ENCODE measurements at regions of chr9 and their contacts with region 1.

Region 1: GRCh38 chr9:87324613-87325194 is 173.0 kb upstream of the DAPK1 start:
- DNase-seq: peak; percentile 75
- H3K4me3 Mint-ChIP-seq: no peak overlapping the region
- H3K27ac Mint-ChIP-seq: no peak overlapping the region
- H3K4me1 Mint-ChIP-seq: peaks cover 17% of the 10 kb centered on the region
- H3K27me3 Mint-ChIP-seq: no peaks in the 10 kb centered on the region
- CTCF ChIP-seq: peak; percentile 52

Region 2: GRCh38 chr9:86202338-86202882 is 1122.3 kb before region 1 on chr9:
- CTCF ChIA-PET with region 1: no interaction called
- POLR2A ChIA-PET with region 1: no interaction called
- intact Hi-C with region 1: loop called (anchors 2 kb)
- DNase-seq: peak; percentile 64
- H3K4me3 Mint-ChIP-seq: no peak overlapping the region
- H3K27ac Mint-ChIP-seq: no peak overlapping the region
- H3K4me1 Mint-ChIP-seq: peaks cover 6% of the 10 kb centered on the region
- H3K27me3 Mint-ChIP-seq: no peaks in the 10 kb centered on the region
- CTCF ChIP-seq: peak; percentile 65

Region 3: GRCh38 chr9:86434039-86434726 is 890.5 kb before region 1 on chr9:
- CTCF ChIA-PET with region 1: interaction called, 52 read pairs
- POLR2A ChIA-PET with region 1: interaction called, 3 read pairs
- intact Hi-C with region 1: loop called (anchors 1 kb)
- DNase-seq: peak; percentile 56
- H3K4me3 Mint-ChIP-seq: no peak overlapping the region
- H3K27ac Mint-ChIP-seq: no peak overlapping the region
- H3K4me1 Mint-ChIP-seq: peaks cover 13% of the 10 kb centered on the region
- H3K27me3 Mint-ChIP-seq: no peaks in the 10 kb centered on the region
- CTCF ChIP-seq: peak; percentile 73

Region 4: DNA sequence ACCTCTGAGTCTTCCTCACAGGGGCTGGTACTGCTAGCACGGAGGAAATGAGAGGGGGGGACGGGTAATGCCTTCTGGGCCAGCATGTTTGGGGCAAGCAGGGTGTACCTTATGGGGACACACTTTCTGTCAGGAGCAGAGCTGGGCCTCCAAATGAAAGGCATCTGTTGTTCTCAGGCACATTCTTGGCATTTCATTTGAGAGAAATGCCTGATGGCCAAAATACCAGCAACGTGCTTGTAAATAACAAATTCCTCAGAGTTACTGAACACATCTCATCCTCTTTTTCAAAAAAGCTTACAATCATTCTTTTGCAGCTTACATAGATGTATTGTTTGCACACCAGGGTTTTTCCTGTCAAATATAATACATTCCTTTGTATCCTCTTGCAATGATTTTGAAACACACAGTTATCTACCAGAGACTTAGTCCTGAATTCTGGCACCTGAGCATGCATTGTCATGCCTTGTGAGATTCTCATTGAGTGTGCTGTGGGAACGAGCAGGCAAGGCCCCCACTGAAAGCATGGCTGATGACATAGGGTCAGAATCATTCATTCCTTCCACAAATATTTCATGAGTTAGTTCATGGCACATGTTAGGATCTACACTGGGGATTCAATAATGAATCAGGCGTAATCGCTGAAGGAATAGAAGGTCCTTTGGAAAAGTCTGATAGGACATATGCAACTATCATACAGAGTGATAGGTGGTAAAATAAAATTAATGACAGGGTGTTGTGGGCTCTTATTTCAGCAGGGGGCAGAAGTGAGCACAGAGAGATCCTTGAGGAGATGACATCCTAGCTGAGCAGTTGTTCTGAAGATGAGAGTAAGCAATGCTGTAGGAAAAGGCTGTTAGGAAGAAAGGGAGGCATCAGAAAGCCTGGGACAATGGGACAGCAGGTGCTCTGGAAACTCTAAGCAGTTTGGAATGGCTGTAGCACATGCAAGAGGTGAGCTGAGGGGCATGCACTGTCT is 709.5 kb before region 1 on chr9:
- CTCF ChIA-PET with region 1: no interaction called
- POLR2A ChIA-PET with region 1: no interaction called
- intact Hi-C with region 1: loop called (anchors 1 kb)
- DNase-seq: peak; percentile 55
- H3K4me3 Mint-ChIP-seq: no peak overlapping the region
- H3K27ac Mint-ChIP-seq: no peak overlapping the region
- H3K4me1 Mint-ChIP-seq: no peaks in the 10 kb centered on the region
- H3K27me3 Mint-ChIP-seq: no peaks in the 10 kb centered on the region
- CTCF ChIP-seq: peak; percentile 51

Region 5: DNA sequence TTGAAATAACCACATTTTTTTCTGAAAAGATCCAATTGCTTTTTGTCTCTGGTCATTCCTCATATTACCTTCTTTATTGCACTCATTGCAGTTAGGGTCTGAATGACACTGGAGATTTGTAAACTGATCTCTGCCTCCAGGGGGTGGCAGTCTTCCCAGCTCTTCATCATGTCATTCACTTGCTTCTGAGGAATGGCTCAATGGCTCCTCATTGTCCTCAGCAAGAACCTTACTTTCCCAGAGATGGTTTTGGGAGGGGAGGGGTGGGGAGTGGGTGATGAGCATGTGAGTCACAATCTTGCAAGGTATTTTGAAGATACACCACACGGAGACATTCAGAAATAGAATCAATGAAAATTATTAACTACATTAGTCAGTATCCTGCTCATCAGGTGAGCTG is 217.6 kb before region 1 on chr9:
- CTCF ChIA-PET with region 1: interaction called, 4 read pairs
- POLR2A ChIA-PET with region 1: interaction called, 3 read pairs
- intact Hi-C with region 1: loop called (anchors 2 kb)
- DNase-seq: peak; percentile 62
- H3K4me3 Mint-ChIP-seq: no peak overlapping the region
- H3K27ac Mint-ChIP-seq: peak overlapping the region; percentile 48
- H3K4me1 Mint-ChIP-seq: peaks cover 30% of the 10 kb centered on the region
- H3K27me3 Mint-ChIP-seq: no peaks in the 10 kb centered on the region
- CTCF ChIP-seq: no peak

Region 6: DNA sequence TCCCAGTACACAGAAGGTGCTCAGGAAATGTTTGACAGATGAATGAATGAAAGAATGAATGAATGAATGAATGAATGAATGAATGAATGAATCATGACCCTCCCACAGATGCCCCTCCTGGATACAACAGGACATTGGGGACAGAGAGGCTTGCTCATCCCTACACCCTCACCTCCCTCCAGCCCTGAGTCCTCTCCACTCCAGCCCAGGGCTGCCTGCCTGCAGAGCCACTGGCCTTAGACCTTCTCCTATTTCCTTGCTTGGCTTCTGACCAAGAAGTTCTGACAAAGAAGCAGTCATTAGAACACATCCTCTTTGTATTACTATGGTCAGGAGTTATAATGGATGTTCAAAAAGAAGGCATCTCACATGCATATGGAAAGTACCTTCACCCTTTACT is 67.7 kb before region 1 on chr9:
- CTCF ChIA-PET with region 1: no interaction called
- POLR2A ChIA-PET with region 1: no interaction called
- intact Hi-C with region 1: no loop called
- DNase-seq: peak; percentile 29
- H3K4me3 Mint-ChIP-seq: no peak overlapping the region
- H3K27ac Mint-ChIP-seq: no peak overlapping the region
- H3K4me1 Mint-ChIP-seq: no peaks in the 10 kb centered on the region
- H3K27me3 Mint-ChIP-seq: no peaks in the 10 kb centered on the region
- CTCF ChIP-seq: no peak

Region 7: DNA sequence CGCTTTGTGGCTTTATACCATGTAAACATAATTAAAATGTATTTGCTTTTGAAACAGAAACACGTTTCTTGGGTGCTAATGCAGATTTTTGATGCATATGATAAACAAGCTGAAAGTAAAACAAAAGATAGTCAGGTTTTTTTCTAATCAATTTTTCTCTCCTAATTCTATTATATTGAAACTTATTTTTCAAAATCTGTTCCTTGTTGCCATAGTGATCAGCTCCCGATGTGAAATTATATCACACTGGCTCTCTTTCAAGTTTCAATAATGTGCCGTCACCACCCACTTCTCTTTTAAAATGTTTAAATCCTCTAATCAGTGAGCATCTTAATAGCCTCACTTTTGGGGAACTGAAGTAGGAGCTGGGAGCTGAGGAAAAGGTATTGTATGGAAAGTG is 136.6 kb after region 1 on chr9:
- CTCF ChIA-PET with region 1: no interaction called
- POLR2A ChIA-PET with region 1: no interaction called
- intact Hi-C with region 1: no loop called
- DNase-seq: no peak
- H3K4me3 Mint-ChIP-seq: no peak overlapping the region
- H3K27ac Mint-ChIP-seq: no peak overlapping the region
- H3K4me1 Mint-ChIP-seq: peaks cover 6% of the 10 kb centered on the region
- H3K27me3 Mint-ChIP-seq: no peaks in the 10 kb centered on the region
- CTCF ChIP-seq: no peak